GM12878 (cell line): ENCODE measurements at regions of chr4 and their contacts with region 1.

Region 1: GRCh38 chr4:170374770-170375169 is 285.0 kb upstream of the AADAT start:
- DNase-seq: no peak
- ATAC-seq: peak; percentile 98
- H3K4me3 ChIP-seq: no peak overlapping the region
- H3K27ac ChIP-seq: no peak overlapping the region
- H3K4me1 ChIP-seq: no peaks in the 10 kb centered on the region
- H3K27me3 ChIP-seq: no peaks in the 10 kb centered on the region
- CTCF ChIP-seq: peak; percentile 57 to 84 (median 71)
- EP300 ChIP-seq: no peak
- POLR2A ChIP-seq: no peak
- RAD21 ChIP-seq: peak; percentile 84

Region 2: DNA sequence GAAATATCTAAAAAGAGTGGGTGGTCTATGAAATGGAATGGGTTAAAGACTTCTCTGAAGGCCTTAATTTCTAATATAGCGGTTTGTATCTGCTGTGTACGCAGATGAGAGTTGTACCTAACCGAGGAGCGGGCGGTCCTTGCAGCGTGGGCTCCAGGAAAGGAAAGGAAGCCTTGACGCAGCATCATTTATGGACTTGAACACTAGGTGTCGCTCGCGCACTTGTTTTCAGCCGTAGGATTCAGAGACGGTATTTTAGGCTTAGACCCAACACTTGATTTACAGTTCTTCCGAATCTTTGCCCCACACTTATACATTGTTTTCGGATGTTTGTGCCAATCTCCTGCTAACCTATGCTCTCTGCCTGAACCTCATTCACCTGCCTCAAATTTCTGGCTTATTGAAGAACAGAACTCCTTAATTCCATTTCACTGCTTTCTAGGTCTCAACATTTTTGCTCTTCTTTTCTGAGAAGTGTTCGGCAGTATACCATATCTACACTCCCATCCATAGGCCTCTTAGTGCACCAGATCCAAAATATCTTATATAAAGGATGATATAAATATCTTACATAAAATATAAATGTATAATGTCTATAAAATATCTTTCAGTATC is 236.1 kb before region 1 on chr4:
- CTCF ChIA-PET with region 1: interaction called, 4 read pairs
- POLR2A ChIA-PET with region 1: no interaction called
- RAD21 ChIA-PET with region 1: no interaction called
- SMC1A ChIA-PET with region 1: interaction called, 4 read pairs
- in situ Hi-C with region 1: loop called (anchors 10 kb)
- intact Hi-C with region 1: loop called (anchors 2 kb)
- DNase-seq: peak; percentile 27
- ATAC-seq: peak; percentile 98
- H3K4me3 ChIP-seq: no peak overlapping the region
- H3K27ac ChIP-seq: no peak overlapping the region
- H3K4me1 ChIP-seq: no peaks in the 10 kb centered on the region
- H3K27me3 ChIP-seq: no peaks in the 10 kb centered on the region; a peak in 1 of 4 replicates
- CTCF ChIP-seq: peak; percentile 74 to 94 (median 79)
- EP300 ChIP-seq: no peak
- POLR2A ChIP-seq: no peak
- RAD21 ChIP-seq: peak; percentile 86

Region 3: DNA sequence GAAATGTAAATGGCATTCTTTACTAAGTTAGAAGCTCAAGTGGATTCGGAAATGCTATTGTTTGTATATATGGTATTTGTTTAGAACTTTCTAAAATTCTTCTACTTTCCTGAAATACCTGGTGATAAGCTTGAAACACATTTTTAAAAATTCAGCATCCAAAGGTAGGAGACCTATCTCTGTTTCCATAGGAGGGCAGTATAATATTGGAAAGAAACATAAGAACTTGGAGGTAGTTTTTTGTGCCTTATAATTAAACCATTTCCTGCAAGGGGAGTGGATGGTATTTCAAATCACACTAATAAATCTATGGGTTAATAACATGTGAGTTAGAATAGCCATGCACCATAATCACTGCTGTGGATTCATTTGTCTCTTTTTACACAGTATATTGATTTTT is 67.6 kb before region 1 on chr4:
- CTCF ChIA-PET with region 1: interaction called, 22 read pairs
- POLR2A ChIA-PET with region 1: no interaction called
- RAD21 ChIA-PET with region 1: interaction called, 7 read pairs
- SMC1A ChIA-PET with region 1: interaction called, 15 read pairs
- in situ Hi-C with region 1: no loop called
- intact Hi-C with region 1: no loop called
- DNase-seq: no peak
- ATAC-seq: no peak
- H3K4me3 ChIP-seq: no peak overlapping the region
- H3K27ac ChIP-seq: no peak overlapping the region
- H3K4me1 ChIP-seq: no peaks in the 10 kb centered on the region
- H3K27me3 ChIP-seq: no peaks in the 10 kb centered on the region
- CTCF ChIP-seq: peak in 1 of 3 experiments; percentile 26; a peak in 1 of 6 replicates
- EP300 ChIP-seq: no peak
- POLR2A ChIP-seq: no peak
- RAD21 ChIP-seq: peak; percentile 23; the same call in 1 of the 2 replicates